BJ (cell line): ENCODE measurements at regions of chr17 and their contacts with region 1.

Region 1: DNA sequence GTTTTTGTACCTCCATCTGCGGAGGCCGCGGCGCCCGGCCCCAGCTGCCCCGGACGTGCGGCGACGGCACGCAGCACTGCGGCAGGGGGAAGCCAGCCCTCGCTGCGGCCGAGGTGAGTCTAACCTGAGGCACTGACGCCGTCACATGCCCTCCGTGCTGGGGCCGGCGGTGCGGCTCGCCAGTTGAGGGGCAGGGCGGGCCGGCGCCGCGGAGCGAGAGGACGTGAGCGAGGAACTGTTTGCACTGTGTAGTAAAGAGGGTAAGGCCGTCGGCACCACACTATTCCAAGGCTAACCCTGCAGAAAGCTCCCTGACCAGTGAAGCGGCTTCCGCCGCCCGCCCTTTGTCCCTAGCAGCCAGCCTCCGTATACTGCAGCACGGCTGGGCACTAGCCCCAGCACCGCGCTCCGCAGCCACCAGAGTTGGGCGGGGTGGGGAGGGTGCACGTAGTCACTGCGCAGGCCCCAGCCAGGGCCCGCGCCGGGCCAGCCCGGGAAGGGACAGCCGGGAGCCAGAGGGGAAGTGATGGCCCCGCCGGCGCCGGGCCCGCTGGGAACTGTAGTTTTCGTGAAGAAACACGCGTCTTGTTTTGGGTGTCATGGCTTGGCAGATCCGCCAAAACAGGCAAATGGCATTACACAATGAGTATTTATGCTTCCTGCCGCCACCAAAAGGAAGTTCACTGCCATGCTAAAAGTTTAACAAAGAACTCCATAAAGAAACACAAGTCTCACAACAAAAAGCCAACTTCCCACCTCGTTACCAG is 580 bp upstream of the KANSL1 start:
- DNase-seq: peak; percentile 89
- H3K4me3 ChIP-seq: peak overlapping the region; percentile 86
- H3K27me3 ChIP-seq: no peaks in the 10 kb centered on the region
- CTCF ChIP-seq: 0 out of 2 replicates have a peak, but pooled peaks have one; percentile 16

Region 2: GRCh38 chr17:46026166-46027047 is 167.4 kb before region 1 on chr17:
- CTCF ChIA-PET with region 1: no interaction called
- POLR2A ChIA-PET with region 1: no interaction called
- DNase-seq: no peak
- H3K4me3 ChIP-seq: no peak overlapping the region
- H3K27me3 ChIP-seq: no peaks in the 10 kb centered on the region
- CTCF ChIP-seq: no peak

Region 3: GRCh38 chr17:46089389-46089965 is 104.3 kb before region 1 on chr17:
- CTCF ChIA-PET with region 1: interaction called, 11 read pairs
- POLR2A ChIA-PET with region 1: no interaction called
- DNase-seq: no peak
- H3K4me3 ChIP-seq: no peak overlapping the region
- H3K27me3 ChIP-seq: no peaks in the 10 kb centered on the region
- CTCF ChIP-seq: no peak

Region 4: DNA sequence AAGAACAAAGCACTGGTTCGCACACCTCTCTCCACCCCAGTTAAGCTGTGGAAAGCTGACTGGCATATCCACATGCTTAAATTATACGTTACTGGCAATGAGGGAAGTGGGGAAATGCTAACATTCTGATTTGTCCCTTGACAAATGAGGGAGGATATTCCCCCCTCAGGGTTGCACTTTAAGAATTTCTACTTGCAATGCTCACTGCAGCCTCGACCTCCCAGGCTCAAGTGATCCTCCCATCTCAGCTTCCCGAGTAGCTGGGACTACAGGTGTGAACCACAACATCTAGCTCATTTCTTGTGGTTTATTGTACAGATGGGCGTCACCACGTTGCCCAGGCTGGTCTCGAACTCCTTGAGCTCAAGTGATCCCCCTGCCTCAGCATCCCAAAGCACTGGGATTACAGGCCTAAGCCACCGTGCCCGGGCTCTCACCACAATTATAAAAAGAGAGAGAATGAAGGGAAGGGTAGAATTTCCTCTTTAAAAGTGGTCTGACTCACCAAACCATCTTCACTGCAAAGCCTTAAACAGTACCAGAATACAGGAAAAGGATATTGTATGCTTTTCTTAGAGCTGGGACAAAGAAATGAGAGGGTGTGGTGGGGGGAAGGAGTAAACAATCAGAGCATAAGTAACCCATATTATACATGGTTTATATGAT is 39.5 kb before region 1 on chr17:
- CTCF ChIA-PET with region 1: interaction called, 13 read pairs
- POLR2A ChIA-PET with region 1: no interaction called
- DNase-seq: no peak
- H3K4me3 ChIP-seq: no peak overlapping the region
- H3K27me3 ChIP-seq: no peaks in the 10 kb centered on the region
- CTCF ChIP-seq: no peak

Region 5: GRCh38 chr17:46179375-46179999 is 14.3 kb before region 1 on chr17:
- CTCF ChIA-PET with region 1: interaction called, 48 read pairs
- POLR2A ChIA-PET with region 1: interaction called, 8 read pairs
- DNase-seq: no peak
- H3K4me3 ChIP-seq: no peak overlapping the region
- H3K27me3 ChIP-seq: no peaks in the 10 kb centered on the region
- CTCF ChIP-seq: no peak

Region 6: GRCh38 chr17:46212634-46213435 is 19.0 kb after region 1 on chr17:
- CTCF ChIA-PET with region 1: interaction called, 56 read pairs
- POLR2A ChIA-PET with region 1: interaction called, 4 read pairs
- DNase-seq: no peak
- H3K4me3 ChIP-seq: no peak overlapping the region
- H3K27me3 ChIP-seq: no peaks in the 10 kb centered on the region
- CTCF ChIP-seq: peak; percentile 91